ENCODE measurements at regions of chr11 and their contacts with region 1.

Region 1: DNA sequence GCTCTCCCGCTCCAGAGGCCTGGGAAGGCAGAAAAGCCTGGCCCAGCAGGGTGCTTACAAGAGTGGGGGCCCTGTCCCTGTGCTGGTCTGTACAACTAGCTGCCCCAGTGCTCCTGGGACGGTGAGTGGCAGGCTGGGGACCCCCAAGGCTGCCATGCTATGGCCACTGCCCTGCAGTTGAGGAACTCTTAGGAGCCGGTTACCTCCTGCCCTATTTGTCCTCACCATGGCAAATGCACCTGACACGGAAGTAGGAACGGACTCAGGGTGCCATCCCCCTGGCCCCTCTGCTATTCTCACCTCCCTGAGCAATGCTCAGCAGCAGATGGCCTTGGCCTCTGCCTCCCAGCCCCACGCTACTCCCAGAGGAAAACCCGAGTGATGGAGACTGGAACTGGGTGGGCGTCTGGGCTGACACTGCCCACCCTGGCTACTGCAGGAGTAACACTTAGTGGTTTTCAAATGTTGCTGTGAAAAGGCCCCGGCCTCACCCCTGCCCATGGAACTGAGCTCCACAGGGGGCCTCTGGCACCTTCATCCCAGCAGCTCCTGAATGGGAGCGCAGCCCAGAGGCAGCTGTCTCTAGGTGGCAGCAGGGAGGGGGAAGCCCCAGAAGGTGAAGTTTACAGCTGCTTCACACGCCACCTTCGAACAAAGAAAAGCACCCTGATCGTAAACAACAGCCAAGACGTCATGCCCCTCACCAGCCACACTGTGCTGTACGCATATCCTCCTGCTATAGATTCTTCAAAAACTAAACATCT is 105.3 kb downstream of the CTTN start:
- DNase-seq: no peak
- H3K4me3 ChIP-seq: no peak overlapping the region
- H3K27ac ChIP-seq: no peak overlapping the region
- H3K4me1 ChIP-seq: no peaks in the 10 kb centered on the region
- H3K27me3 ChIP-seq: no peaks in the 10 kb centered on the region
- CTCF ChIP-seq: peak; percentile 42; the same call in 1 of the 2 replicates

Region 2: DNA sequence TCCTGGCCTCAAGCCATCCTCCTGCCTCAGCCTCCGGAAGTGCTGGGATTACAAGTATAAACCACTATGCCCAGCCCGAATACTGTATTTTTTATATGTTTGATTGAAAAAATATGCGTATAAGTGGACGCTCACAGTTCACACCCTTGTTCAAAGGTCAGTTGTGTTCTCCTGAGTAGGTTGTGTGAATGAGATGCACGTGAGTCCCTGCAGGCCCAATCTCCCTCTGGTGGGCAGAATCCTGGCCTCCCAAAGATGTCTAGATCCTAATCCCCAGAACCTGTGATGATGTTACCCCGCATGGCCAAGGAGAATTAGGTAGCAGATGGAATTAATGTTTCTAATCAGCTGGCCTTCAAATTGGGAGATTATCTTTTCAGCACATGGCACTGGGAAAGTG is 63.4 kb before region 1 on chr11:
- CTCF ChIA-PET with region 1: interaction called, 10 read pairs
- POLR2A ChIA-PET with region 1: no interaction called
- intact Hi-C with region 1: no loop called
- DNase-seq: no peak
- H3K4me3 ChIP-seq: no peak overlapping the region
- H3K27ac ChIP-seq: no peak overlapping the region
- H3K4me1 ChIP-seq: no peaks in the 10 kb centered on the region
- H3K27me3 ChIP-seq: no peaks in the 10 kb centered on the region
- CTCF ChIP-seq: no peak

Region 3: GRCh38 chr11:70625582-70626518 is 122.2 kb after region 1 on chr11:
- CTCF ChIA-PET with region 1: no interaction called
- POLR2A ChIA-PET with region 1: no interaction called
- intact Hi-C with region 1: no loop called
- DNase-seq: no peak
- H3K4me3 ChIP-seq: no peak overlapping the region
- H3K27ac ChIP-seq: no peak overlapping the region
- H3K4me1 ChIP-seq: no peaks in the 10 kb centered on the region
- H3K27me3 ChIP-seq: no peaks in the 10 kb centered on the region
- CTCF ChIP-seq: no peak

Region 4: GRCh38 chr11:70742553-70743291 is 239.1 kb after region 1 on chr11:
- CTCF ChIA-PET with region 1: no interaction called
- POLR2A ChIA-PET with region 1: no interaction called
- intact Hi-C with region 1: no loop called
- DNase-seq: peak; percentile 32
- H3K4me3 ChIP-seq: no peak overlapping the region
- H3K27ac ChIP-seq: no peak overlapping the region
- H3K4me1 ChIP-seq: peaks cover 4% of the 10 kb centered on the region
- H3K27me3 ChIP-seq: no peaks in the 10 kb centered on the region
- CTCF ChIP-seq: no peak

Measured in A673 (cell line).